ENCODE measurements at regions of chr6 and their contacts with region 1.

Region 1: GRCh38 chr6:6856538-6857523 is 250.9 kb upstream of the RREB1 start:
- DNase-seq: peak; percentile 98
- ATAC-seq: peak; percentile 81
- H3K4me3 ChIP-seq: peak overlapping the region; percentile 36
- H3K27ac ChIP-seq: peak overlapping the region; percentile 96
- H3K4me1 ChIP-seq: peaks cover 29% of the 10 kb centered on the region
- H3K27me3 ChIP-seq: no peaks in the 10 kb centered on the region
- CTCF ChIP-seq: no peak

Region 2: GRCh38 chr6:6820641-6821238 is 36.1 kb before region 1 on chr6:
- CTCF ChIA-PET with region 1: no interaction called
- POLR2A ChIA-PET with region 1: no interaction called
- intact Hi-C with region 1: loop called (anchors 2 kb)
- DNase-seq: peak; percentile 97
- ATAC-seq: peak; percentile 91
- H3K4me3 ChIP-seq: 0 out of 2 replicates have a peak overlapping the region, but pooled peaks have one; percentile 5
- H3K27ac ChIP-seq: peak overlapping the region; percentile 98
- H3K4me1 ChIP-seq: peaks cover 39% of the 10 kb centered on the region
- H3K27me3 ChIP-seq: no peaks in the 10 kb centered on the region
- CTCF ChIP-seq: no peak

Region 3: GRCh38 chr6:6910734-6911295 is 54.0 kb after region 1 on chr6:
- CTCF ChIA-PET with region 1: no interaction called
- POLR2A ChIA-PET with region 1: no interaction called
- intact Hi-C with region 1: loop called (anchors 2 kb)
- DNase-seq: peak; percentile 94
- ATAC-seq: peak; percentile 93
- H3K4me3 ChIP-seq: no peak overlapping the region
- H3K27ac ChIP-seq: peak overlapping the region; percentile 47
- H3K4me1 ChIP-seq: peaks cover 31% of the 10 kb centered on the region
- H3K27me3 ChIP-seq: no peaks in the 10 kb centered on the region
- CTCF ChIP-seq: no peak

Region 4: GRCh38 chr6:6993503-6994237 is 136.8 kb after region 1 on chr6:
- CTCF ChIA-PET with region 1: no interaction called
- POLR2A ChIA-PET with region 1: no interaction called
- intact Hi-C with region 1: no loop called
- DNase-seq: no peak
- ATAC-seq: no peak
- H3K4me3 ChIP-seq: no peak overlapping the region
- H3K27ac ChIP-seq: no peak overlapping the region
- H3K4me1 ChIP-seq: no peaks in the 10 kb centered on the region
- H3K27me3 ChIP-seq: no peaks in the 10 kb centered on the region
- CTCF ChIP-seq: no peak

Region 5: DNA sequence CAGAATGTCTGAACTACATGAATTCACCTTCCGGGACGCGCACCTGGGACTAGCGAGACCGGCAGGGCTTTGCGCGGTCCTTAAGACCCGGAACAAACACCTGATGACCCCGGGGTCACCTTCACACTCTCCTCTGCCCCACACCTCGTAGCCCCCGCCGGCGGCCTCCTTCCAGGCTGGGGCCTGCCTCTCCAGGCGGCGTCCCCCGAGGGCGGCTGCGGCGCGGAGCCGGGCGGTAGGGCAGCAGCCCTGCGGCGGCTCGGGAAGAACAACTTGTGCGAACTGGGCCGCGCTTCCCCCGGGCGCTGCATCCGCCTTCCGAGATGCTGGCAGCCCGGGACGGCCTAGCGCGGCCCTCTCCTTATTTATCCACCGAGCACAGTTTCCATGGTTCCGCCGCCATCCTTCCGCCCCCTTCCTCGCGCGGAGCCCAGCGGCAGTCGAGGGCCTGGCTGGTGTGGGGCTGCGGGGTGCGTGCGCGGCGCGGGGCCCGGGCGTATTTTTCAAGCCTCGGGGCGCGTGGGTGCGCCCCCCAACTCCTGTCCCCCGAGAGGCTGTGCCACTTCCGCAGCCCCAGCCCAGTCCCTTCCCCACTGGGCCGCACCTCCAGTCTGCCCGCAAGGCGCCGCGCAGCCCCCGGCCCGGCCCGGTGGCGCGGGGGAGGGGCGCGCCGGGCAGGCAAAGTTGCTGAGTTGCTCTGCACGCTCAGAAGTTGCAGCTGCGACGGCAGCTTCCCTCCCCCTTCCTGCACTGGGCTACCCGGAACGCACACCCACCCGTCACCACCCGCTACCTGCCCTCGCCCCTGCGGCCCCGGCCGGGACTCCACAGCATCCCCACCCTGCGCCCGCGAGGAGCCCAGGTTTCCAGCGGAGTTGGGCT is 194.6 kb after region 1 on chr6:
- CTCF ChIA-PET with region 1: interaction called, 6 read pairs
- POLR2A ChIA-PET with region 1: no interaction called
- intact Hi-C with region 1: loop called (anchors 5 kb)
- DNase-seq: peak; percentile 60
- ATAC-seq: peak; percentile 45
- H3K4me3 ChIP-seq: peak overlapping the region; percentile 79
- H3K27ac ChIP-seq: peak overlapping the region; percentile 96
- H3K4me1 ChIP-seq: peaks cover 50% of the 10 kb centered on the region
- H3K27me3 ChIP-seq: no peaks in the 10 kb centered on the region
- CTCF ChIP-seq: no peak

Measured in PC-3 (cell line).